GM12878 (cell line): ENCODE measurements at regions of chr12 and their contacts with region 1.

Region 1: DNA sequence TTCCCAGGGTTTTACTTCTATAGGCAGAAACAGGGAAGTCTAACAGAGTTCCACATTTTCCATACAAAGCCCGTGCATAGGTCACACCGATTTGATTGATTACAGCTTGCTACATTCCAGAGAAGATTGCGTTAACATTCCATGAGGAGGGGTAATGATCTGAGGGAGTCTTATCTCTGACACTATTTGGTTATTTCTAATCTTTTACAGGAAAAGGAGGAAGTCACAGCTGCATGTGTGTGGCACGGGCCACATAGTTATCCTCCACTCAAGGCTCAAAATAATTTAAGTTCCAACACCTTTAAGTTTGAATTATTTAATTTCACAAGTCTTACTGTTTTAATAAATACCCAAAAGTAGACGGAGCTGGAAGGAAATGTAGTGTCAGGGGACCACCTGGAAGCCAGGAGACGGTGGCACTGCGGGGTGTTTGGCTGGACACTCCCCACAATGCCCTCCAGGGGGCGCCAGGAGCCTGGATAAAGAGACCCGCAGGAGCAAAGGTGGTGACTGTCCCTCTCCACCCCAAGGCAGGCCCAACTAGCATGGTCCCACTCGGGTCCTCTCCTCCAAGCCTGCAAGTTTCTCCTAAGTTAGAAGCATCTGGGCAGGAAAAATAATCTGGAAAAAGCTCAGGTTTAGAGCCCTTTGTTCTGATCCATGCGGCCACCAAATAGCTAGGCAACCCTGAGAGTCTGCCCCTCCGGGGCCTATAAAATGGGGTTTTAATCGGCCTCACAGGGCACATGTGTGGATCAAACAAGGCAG is 20.2 kb downstream of the KRT8 start:
- DNase-seq: no peak
- ATAC-seq: peak; percentile 96
- H3K4me3 ChIP-seq: no peak overlapping the region
- H3K27ac ChIP-seq: no peak overlapping the region
- H3K4me1 ChIP-seq: no peaks in the 10 kb centered on the region
- H3K27me3 ChIP-seq: no peaks in the 10 kb centered on the region; a peak in 1 of 4 replicates
- CTCF ChIP-seq: peak; percentile 83 to 88 (median 87)
- EP300 ChIP-seq: no peak
- POLR2A ChIP-seq: no peak
- RAD21 ChIP-seq: peak; percentile 88

Region 2: DNA sequence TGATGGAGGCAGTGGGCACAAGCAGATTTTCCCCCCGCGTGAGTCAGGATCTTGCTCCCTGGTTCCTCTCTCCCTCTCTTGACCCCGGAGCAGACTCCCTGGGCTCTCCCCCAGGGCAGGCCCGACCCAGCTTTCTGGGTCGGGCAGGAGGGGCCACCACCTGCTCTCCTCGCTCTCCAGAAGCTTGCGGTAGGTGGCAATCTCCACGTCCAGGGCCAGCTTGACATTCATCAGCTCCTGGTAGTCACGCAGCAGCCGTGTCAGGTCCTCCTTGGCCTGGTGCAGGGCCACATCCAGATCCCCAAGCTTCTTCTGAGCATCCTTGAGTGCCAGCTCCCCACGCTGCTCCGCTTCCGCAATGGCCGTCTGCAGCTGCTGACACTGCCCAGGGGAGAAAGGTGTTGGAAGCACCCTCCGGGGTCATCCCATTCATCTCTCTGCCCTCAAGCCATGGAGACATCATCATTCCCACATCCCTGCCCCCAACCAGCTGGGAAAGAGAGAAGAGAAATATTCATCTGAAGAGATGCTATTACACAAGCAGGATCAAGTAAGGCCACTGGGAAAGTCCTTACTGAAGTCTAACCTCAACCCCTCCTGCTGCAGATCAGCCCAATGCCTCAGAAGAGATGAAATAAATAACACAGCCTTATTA is 61.7 kb before region 1 on chr12:
- CTCF ChIA-PET with region 1: no interaction called
- POLR2A ChIA-PET with region 1: no interaction called
- RAD21 ChIA-PET with region 1: no interaction called
- SMC1A ChIA-PET with region 1: no interaction called
- in situ Hi-C with region 1: no loop called
- intact Hi-C with region 1: no loop called
- DNase-seq: no peak
- ATAC-seq: no peak
- H3K4me3 ChIP-seq: no peak overlapping the region
- H3K27ac ChIP-seq: no peak overlapping the region
- H3K4me1 ChIP-seq: no peaks in the 10 kb centered on the region
- H3K27me3 ChIP-seq: peaks cover 0 to 9% of the 10 kb centered on the region in 2 experiments; a peak in 2 of 4 replicates
- CTCF ChIP-seq: no peak
- EP300 ChIP-seq: no peak
- POLR2A ChIP-seq: no peak
- RAD21 ChIP-seq: no peak

Region 3: GRCh38 chr12:52942066-52942900 is 57.6 kb after region 1 on chr12:
- CTCF ChIA-PET with region 1: interaction called, 22 read pairs
- POLR2A ChIA-PET with region 1: no interaction called
- RAD21 ChIA-PET with region 1: no interaction called
- SMC1A ChIA-PET with region 1: interaction called, 4 read pairs
- in situ Hi-C with region 1: no loop called
- intact Hi-C with region 1: no loop called
- DNase-seq: no peak
- ATAC-seq: no peak
- H3K4me3 ChIP-seq: no peak overlapping the region
- H3K27ac ChIP-seq: no peak overlapping the region
- H3K4me1 ChIP-seq: no peaks in the 10 kb centered on the region
- H3K27me3 ChIP-seq: peaks cover 4 to 7% of the 10 kb centered on the region in 2 experiments
- CTCF ChIP-seq: no peak
- EP300 ChIP-seq: no peak
- POLR2A ChIP-seq: no peak
- RAD21 ChIP-seq: no peak

Region 4: GRCh38 chr12:52956987-52957386 is 72.3 kb after region 1 on chr12:
- CTCF ChIA-PET with region 1: interaction called, 23 read pairs
- POLR2A ChIA-PET with region 1: no interaction called
- RAD21 ChIA-PET with region 1: interaction called, 8 read pairs
- SMC1A ChIA-PET with region 1: interaction called, 14 read pairs
- in situ Hi-C with region 1: no loop called
- intact Hi-C with region 1: no loop called
- DNase-seq: no peak
- ATAC-seq: 0 out of 3 replicates have a peak, but pooled peaks have one; percentile 17
- H3K4me3 ChIP-seq: no peak overlapping the region
- H3K27ac ChIP-seq: no peak overlapping the region
- H3K4me1 ChIP-seq: no peaks in the 10 kb centered on the region
- H3K27me3 ChIP-seq: no peaks in the 10 kb centered on the region
- CTCF ChIP-seq: no peak
- EP300 ChIP-seq: no peak
- POLR2A ChIP-seq: no peak
- RAD21 ChIP-seq: no peak

Region 5: GRCh38 chr12:52992699-52993557 is 108.2 kb after region 1 on chr12:
- CTCF ChIA-PET with region 1: interaction called, 418 read pairs
- POLR2A ChIA-PET with region 1: no interaction called
- RAD21 ChIA-PET with region 1: no interaction called
- SMC1A ChIA-PET with region 1: interaction called, 21 read pairs
- in situ Hi-C with region 1: no loop called
- intact Hi-C with region 1: no loop called
- DNase-seq: no peak
- ATAC-seq: no peak
- H3K4me3 ChIP-seq: no peak overlapping the region
- H3K27ac ChIP-seq: no peak overlapping the region
- H3K4me1 ChIP-seq: no peaks in the 10 kb centered on the region
- H3K27me3 ChIP-seq: no peaks in the 10 kb centered on the region
- CTCF ChIP-seq: no peak
- EP300 ChIP-seq: no peak
- POLR2A ChIP-seq: no peak
- RAD21 ChIP-seq: no peak